MCF 10A (cell line): ENCODE measurements at regions of chr12 and their contacts with region 1.

Region 1: GRCh38 chr12:108457006-108457733 is 57.9 kb upstream of the FICD start:
- DNase-seq: peak; percentile 76
- H3K4me3 Mint-ChIP-seq: no peak overlapping the region
- H3K27ac Mint-ChIP-seq: no peak overlapping the region
- H3K4me1 Mint-ChIP-seq: no peaks in the 10 kb centered on the region
- H3K27me3 Mint-ChIP-seq: peaks cover 37% of the 10 kb centered on the region
- CTCF ChIP-seq: peak; percentile 60

Region 2: GRCh38 chr12:107992870-107993451 is 464.2 kb before region 1 on chr12:
- CTCF ChIA-PET with region 1: interaction called, 24 read pairs
- POLR2A ChIA-PET with region 1: no interaction called
- intact Hi-C with region 1: loop called (anchors 1 kb)
- DNase-seq: peak; percentile 55
- H3K4me3 Mint-ChIP-seq: no peak overlapping the region
- H3K27ac Mint-ChIP-seq: no peak overlapping the region
- H3K4me1 Mint-ChIP-seq: no peaks in the 10 kb centered on the region
- H3K27me3 Mint-ChIP-seq: peaks cover 12% of the 10 kb centered on the region
- CTCF ChIP-seq: peak; percentile 39

Region 3: DNA sequence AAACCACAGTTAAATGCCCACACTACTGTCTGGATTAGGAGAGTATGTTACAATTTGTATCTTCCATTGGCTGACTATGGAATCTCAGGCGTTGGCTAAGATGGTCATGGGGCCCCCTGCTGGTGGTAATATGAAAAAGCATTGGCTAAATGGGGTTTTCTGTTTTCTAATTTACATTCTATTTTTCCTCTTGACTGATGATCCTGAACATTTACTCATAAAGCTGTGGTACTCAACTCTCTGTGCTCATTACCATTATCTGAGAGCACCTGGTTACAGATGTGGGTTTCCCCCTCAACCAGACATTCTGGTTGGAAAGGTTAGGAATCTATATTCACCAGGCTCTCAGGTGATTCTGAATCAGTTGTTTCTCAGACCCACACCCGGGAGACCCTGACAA is 263.3 kb before region 1 on chr12:
- CTCF ChIA-PET with region 1: no interaction called
- POLR2A ChIA-PET with region 1: no interaction called
- intact Hi-C with region 1: loop called (anchors 5 kb)
- DNase-seq: peak; percentile 45
- H3K4me3 Mint-ChIP-seq: no peak overlapping the region
- H3K27ac Mint-ChIP-seq: no peak overlapping the region
- H3K4me1 Mint-ChIP-seq: no peaks in the 10 kb centered on the region
- H3K27me3 Mint-ChIP-seq: no peaks in the 10 kb centered on the region
- CTCF ChIP-seq: peak; percentile 38

Region 4: GRCh38 chr12:108305520-108305919 is 151.7 kb before region 1 on chr12:
- CTCF ChIA-PET with region 1: no interaction called
- POLR2A ChIA-PET with region 1: no interaction called
- intact Hi-C with region 1: loop called (anchors 1 kb)
- DNase-seq: peak; percentile 91
- H3K4me3 Mint-ChIP-seq: peak overlapping the region; percentile 66
- H3K27ac Mint-ChIP-seq: peak overlapping the region; percentile 46
- H3K4me1 Mint-ChIP-seq: peaks cover 44% of the 10 kb centered on the region
- H3K27me3 Mint-ChIP-seq: no peaks in the 10 kb centered on the region
- CTCF ChIP-seq: no peak

Region 5: GRCh38 chr12:108473400-108474055 is 16.4 kb after region 1 on chr12:
- CTCF ChIA-PET with region 1: interaction called, 10 read pairs
- POLR2A ChIA-PET with region 1: no interaction called
- intact Hi-C with region 1: no loop called
- DNase-seq: no peak
- H3K4me3 Mint-ChIP-seq: no peak overlapping the region
- H3K27ac Mint-ChIP-seq: no peak overlapping the region
- H3K4me1 Mint-ChIP-seq: no peaks in the 10 kb centered on the region
- H3K27me3 Mint-ChIP-seq: peaks cover 18% of the 10 kb centered on the region
- CTCF ChIP-seq: no peak

Region 6: GRCh38 chr12:108701779-108702441 is 244.7 kb after region 1 on chr12:
- CTCF ChIA-PET with region 1: no interaction called
- POLR2A ChIA-PET with region 1: no interaction called
- intact Hi-C with region 1: no loop called
- DNase-seq: peak; percentile 19
- H3K4me3 Mint-ChIP-seq: peak overlapping the region; percentile 70
- H3K27ac Mint-ChIP-seq: peak overlapping the region; percentile 89
- H3K4me1 Mint-ChIP-seq: peaks cover 31% of the 10 kb centered on the region
- H3K27me3 Mint-ChIP-seq: no peaks in the 10 kb centered on the region
- CTCF ChIP-seq: no peak